ENCODE measurements at regions of chr17 and their contacts with region 1.

Region 1: DNA sequence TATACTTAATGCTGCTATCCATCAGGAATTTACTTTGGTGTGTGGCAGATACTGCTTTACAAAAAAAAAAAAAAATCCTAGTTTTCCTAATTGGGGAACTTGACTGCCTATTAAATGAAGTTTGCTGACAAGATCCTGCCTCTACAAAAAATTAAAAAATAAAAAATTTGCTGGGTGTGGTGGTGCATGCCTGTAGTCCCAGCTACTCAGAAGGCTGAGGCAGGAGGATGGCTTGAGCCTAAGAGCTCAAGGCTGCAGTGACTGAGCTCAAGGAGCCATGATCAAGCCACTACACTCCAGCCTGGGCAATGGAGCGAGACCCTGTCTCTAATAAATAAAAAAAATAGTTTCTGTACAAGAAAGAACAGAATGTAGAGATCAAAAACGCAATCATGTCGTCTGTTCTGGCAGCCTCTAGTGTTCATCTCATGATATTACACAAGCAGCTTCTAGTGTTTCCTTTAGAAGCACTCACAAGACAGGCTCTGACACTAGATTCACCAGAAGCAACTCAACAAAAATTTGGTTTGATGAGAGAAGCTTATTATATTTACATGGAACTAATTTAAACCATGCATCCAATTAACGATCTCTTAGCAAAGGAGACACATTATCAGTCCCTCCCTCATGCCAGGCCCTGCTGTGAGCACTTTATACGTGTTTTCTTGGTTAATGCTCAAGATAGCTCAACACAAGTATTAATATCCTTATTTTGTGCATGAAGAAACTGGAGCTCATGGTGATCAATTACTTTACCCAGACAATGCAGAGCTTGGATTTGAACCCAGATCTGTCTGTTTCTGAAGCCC is 6.8 kb upstream of the KRTAP17-1 start:
- DNase-seq: peak in 2 of 5 donors; percentile 65 to 71
- H3K4me3 ChIP-seq: no peak overlapping the region
- H3K27ac ChIP-seq: no peak overlapping the region
- H3K4me1 ChIP-seq: no peaks in the 10 kb centered on the region
- H3K27me3 ChIP-seq: no peaks in the 10 kb centered on the region
- CTCF ChIP-seq: peak; percentile 82

Region 2: DNA sequence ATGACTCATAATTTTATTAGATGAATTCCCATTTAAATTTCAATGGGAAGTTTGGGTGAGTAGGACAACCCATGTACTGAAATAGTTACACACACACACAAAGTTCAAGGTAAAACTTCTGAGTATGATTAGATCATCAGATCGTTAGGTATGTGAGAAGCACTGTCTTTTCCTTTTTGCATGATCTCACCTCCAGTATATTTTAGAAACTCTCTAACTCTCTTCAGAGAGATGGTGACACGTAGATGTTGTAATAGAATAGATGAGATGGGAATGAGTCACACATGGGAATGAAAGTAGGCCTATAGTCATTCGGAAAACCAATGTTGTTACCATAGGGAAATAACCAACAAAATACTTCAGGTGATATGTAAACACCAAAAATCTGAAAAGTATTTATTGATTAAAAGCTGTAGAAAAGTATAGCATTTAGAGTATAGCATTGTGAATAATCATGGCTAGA is 407.1 kb before region 1 on chr17:
- intact Hi-C with region 1: loop called (anchors 10 kb)
- DNase-seq: no peak
- H3K4me3 ChIP-seq: no peak overlapping the region
- H3K27ac ChIP-seq: no peak overlapping the region
- H3K4me1 ChIP-seq: no peaks in the 10 kb centered on the region
- H3K27me3 ChIP-seq: no peaks in the 10 kb centered on the region
- CTCF ChIP-seq: no peak

Region 3: GRCh38 chr17:41264599-41264998 is 57.7 kb before region 1 on chr17:
- intact Hi-C with region 1: no loop called
- DNase-seq: no peak
- H3K4me3 ChIP-seq: no peak overlapping the region
- H3K27ac ChIP-seq: no peak overlapping the region
- H3K4me1 ChIP-seq: no peaks in the 10 kb centered on the region
- H3K27me3 ChIP-seq: no peaks in the 10 kb centered on the region
- CTCF ChIP-seq: no peak